ENCODE measurements at regions of chr1 and their contacts with region 1.

Region 1: GRCh38 chr1:203006948-203007871 is at the start of gene TMEM183A:
- DNase-seq: peak; percentile 97

Region 2: DNA sequence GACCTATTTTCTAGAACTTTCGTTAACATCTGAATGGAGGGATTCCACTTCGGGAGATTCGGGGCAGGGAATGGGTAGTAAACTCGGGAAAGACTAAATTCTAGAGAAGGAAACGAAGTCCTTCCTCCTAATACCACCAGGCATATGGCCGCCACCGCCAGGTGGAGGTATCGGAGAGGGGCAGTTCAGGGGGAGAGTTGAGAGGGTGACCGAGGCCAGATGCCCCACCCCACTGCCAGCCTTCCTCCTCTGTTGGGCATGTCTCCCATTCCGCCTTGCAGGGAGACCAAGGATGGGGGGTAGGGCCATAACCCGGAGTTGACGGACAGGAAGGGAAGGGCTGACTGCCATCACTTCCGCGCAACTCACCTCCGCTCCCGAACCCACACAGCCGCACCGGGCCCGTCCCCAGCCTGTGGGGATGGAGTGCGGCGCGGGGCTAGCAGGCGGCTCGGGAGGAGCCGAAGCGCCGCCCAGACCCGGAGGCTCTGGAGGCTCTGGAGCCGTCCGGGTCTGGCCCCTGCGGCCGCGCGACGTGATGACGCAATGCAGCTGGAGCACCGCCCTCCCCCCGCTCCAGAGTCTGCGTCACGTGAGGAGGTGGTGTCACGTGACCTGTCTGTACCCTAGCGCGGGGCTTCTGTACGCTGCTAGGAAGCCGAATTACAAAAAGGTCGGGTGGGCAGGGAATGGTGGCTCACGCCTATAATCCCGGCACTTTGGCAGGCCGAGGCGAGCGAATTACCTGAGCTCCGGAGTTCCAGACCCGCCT is 80.3 kb before region 1 on chr1 and contains the start of gene KLHL12:
- CTCF ChIA-PET with region 1: no interaction called
- POLR2A ChIA-PET with region 1: interaction called, 10 read pairs
- DNase-seq: peak; percentile 99

Region 3: DNA sequence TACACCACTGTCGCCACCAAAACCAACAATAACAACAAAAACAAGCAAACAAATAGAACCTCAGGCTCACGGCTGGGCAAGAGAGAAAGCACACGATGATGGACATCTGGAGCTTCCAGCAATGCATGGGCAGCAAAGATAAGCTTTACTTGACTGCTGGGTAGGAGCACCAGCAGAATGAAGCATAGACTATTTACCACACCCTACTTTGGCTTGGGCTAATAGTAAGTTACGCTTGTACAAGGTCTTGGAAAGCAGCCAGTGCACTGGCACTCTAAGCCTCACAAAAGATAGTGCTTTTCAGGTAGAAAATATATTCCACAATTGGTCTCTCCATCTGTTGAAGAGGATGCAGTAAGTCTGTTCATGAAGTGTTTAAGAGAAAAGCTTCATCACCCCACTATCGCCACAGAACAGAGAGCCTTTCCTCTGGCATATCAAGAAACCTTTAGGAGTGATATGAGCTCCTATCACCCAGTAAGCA is 62.7 kb before region 1 on chr1:
- CTCF ChIA-PET with region 1: no interaction called
- POLR2A ChIA-PET with region 1: no interaction called
- DNase-seq: no peak

Region 4: DNA sequence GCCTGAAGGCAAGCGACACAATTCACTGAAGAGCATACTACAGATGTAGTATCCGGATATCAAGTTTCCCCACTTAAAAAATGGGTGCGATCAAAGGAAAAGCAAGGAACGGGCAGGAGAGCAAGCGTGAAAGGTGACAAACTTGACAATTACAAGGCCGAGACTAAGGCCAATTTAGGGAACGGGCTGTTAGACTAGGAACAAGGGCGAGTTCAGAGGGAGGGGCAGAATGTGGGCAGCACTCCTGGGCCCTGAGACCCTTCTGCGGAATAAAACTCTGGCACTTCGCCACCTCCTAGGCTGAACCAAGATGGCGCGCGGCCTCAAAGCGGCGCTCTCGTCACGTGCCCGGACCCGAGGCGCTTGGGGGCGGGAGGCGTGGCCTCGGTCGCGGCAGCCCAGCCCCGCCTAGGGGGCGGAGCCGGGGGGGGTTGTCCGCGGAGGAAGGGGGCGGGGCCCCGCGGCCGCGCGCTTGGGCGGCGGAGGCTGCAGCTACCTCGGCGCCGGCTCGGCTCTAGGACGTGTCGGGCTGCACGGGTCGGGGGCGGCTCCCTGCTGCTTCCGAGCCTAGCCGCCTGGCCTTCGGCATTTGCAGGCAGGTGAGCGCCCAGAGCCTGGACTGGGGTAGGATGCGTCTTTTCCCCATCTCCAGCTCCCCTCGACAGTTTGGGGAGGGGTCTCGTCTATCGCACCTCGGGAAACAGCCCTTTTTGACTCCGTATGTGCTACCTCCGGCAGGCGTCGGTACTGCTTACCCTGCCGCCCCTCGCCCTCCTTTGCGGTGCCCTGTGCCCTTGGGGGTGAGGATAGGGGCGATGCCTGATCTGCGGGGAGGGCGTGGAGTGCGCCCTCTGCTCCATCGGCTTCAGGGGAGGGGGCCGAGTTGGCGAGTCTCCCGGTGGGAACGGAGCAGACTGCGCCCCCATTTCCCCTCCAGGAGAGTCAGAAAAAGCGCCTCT is 19.1 kb after region 1 on chr1 and contains the start of gene PPFIA4:
- CTCF ChIA-PET with region 1: interaction called, 4 read pairs
- POLR2A ChIA-PET with region 1: interaction called, 12 read pairs
- DNase-seq: peak; percentile 100

Region 5: DNA sequence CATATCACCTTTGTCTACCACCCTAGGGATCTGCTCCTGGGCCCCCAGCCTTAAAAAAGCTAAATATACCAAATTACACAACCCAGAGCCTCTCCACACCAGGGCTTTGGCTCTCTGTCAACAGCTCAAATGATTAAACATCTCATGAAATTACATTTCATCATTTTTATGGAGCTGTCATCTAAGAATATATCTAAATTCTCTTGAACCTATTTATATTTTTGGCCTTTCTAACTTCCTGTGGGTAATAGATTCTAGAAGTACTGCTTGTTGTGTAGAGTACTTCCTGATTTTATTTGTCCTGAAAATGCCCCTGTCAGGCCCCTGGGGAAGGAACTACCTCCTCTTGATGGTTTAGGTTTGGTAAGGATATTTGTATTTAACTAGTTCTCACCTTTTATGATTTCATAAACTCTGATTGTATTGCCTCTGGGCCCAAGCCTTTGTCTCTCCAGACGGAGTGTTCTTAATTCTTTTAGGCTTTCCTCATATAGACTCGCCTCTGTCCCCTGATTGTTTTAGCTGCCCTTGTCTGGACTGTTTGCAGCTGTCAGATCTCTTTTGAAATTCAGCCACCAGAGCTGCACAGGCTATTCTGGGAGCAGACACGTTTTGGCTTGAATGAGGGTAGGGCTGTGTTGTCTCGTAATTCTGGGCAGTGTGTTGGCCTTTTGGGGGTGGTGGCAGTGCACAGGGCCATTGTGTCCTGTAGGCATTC is 62.0 kb after region 1 on chr1:
- CTCF ChIA-PET with region 1: no interaction called
- POLR2A ChIA-PET with region 1: no interaction called
- DNase-seq: no peak